ENCODE measurements at regions of chr17 and their contacts with region 1.

Region 1: GRCh38 chr17:42760652-42761581 is at the start of gene RAMP2:
- DNase-seq: no peak
- ATAC-seq: peak; percentile 23
- H3K4me3 Mint-ChIP-seq: peak within 1 kb of the TSS; percentile 81
- H3K27ac Mint-ChIP-seq: peak within 1 kb of the TSS; percentile 61
- H3K4me1 Mint-ChIP-seq: peaks cover 12% of the 10 kb centered on the region
- H3K27me3 Mint-ChIP-seq: peaks cover 32% of the 10 kb centered on the region
- CTCF ChIP-seq: no peak
- total RNA-seq, gene RAMP2: not detected in 2 replicates

Region 2: DNA sequence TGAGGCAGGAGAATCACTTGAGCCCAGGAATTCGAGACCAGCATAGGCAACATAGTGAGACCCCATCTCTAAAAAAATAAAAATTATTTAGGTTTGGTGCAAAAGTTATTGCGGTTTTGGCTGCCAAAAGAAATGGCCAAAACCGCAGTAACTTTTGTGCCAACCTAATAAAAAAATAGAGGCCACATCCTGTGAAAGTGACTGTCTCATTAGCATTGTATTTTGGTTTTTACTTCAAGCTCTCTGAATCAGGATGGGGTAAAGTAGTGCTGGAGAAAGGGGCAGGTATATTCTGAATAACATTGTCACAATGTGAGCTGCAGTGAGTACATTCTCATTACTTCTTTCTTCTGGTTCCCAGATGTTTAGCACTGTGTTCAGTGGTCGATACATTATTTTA is 266.2 kb before region 1 on chr17:
- CTCF ChIA-PET with region 1: no interaction called
- POLR2A ChIA-PET with region 1: no interaction called
- intact Hi-C with region 1: no loop called
- DNase-seq: no peak
- ATAC-seq: no peak
- H3K4me3 Mint-ChIP-seq: no peak overlapping the region
- H3K27ac Mint-ChIP-seq: no peak overlapping the region
- H3K4me1 Mint-ChIP-seq: peaks cover 8% of the 10 kb centered on the region
- H3K27me3 Mint-ChIP-seq: no peaks in the 10 kb centered on the region
- CTCF ChIP-seq: no peak

Region 3: DNA sequence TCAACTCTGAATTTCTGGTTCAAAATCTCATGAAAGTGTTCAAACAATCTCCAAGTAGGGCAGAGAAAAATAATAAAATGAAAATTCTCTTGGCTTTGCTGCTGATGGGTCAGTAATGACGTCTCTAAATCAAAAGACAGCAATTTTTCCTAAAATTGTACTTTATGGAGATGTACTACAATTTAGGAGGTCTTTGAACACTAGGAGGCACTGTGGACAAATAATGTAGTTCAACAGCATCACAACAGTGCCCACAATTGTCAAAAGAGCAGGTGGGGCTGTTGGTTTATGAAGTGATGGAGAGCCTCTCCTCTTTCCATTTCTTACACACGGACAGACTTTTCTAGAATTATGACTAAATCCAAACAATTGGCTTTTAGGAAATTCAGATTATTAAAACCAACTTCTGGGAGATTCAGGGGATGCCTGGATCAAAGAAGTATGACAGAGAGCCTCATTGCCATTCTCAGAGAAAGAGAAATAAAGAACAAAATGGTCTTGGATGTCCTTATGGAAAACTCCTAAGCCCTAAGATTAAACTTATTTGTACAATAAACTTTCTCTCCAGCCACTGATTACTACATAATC is 39.8 kb before region 1 on chr17:
- CTCF ChIA-PET with region 1: interaction called, 22 read pairs
- POLR2A ChIA-PET with region 1: no interaction called
- intact Hi-C with region 1: loop called (anchors 1 kb)
- DNase-seq: no peak
- ATAC-seq: peak; percentile 73
- H3K4me3 Mint-ChIP-seq: no peak overlapping the region
- H3K27ac Mint-ChIP-seq: peak overlapping the region; percentile 20
- H3K4me1 Mint-ChIP-seq: peaks cover 2% of the 10 kb centered on the region
- H3K27me3 Mint-ChIP-seq: no peaks in the 10 kb centered on the region
- CTCF ChIP-seq: no peak

Region 4: GRCh38 chr17:42773290-42774035 is 12.5 kb after region 1 on chr17 and contains the start of gene VPS25:
- CTCF ChIA-PET with region 1: interaction called, 15 read pairs
- POLR2A ChIA-PET with region 1: interaction called, 21 read pairs
- intact Hi-C with region 1: no loop called
- DNase-seq: peak; percentile 71
- ATAC-seq: peak; percentile 92
- H3K4me3 Mint-ChIP-seq: peak within 1 kb of the TSS; percentile 98
- H3K27ac Mint-ChIP-seq: peak within 1 kb of the TSS; percentile 96
- H3K4me1 Mint-ChIP-seq: peaks cover 35% of the 10 kb centered on the region
- H3K27me3 Mint-ChIP-seq: no peaks in the 10 kb centered on the region
- CTCF ChIP-seq: no peak
- total RNA-seq, gene VPS25: 49.7 and 49.8 TPM in 2 replicates

Measured in activated B cell treated with CpG ODN at 0.5 μM for 24 hours (primary cell).